ENCODE measurements at regions of chr2 and their contacts with region 1.

Region 1: GRCh38 chr2:3651691-3652648 is 6.0 kb upstream of the ALLC start:
- DNase-seq: peak; percentile 33 to 89 (median 75)
- H3K4me3 ChIP-seq: peak overlapping the region; percentile 66
- H3K4me3 Mint-ChIP-seq: peak overlapping the region; percentile 79 to 96 (median 89)
- H3K27ac ChIP-seq: peak overlapping the region; percentile 32
- H3K27ac Mint-ChIP-seq: peak overlapping the region in 7 of 8 donors; percentile 87 to 98 (median 95)
- H3K4me1 ChIP-seq: peaks cover 9% of the 10 kb centered on the region
- H3K4me1 Mint-ChIP-seq: peaks cover 11 to 18% (median 16%) of the 10 kb centered on the region in 3 donors
- H3K27me3 ChIP-seq: no peaks in the 10 kb centered on the region
- H3K27me3 Mint-ChIP-seq: peaks cover 0 to 11% of the 10 kb centered on the region in 2 donors

Region 2: DNA sequence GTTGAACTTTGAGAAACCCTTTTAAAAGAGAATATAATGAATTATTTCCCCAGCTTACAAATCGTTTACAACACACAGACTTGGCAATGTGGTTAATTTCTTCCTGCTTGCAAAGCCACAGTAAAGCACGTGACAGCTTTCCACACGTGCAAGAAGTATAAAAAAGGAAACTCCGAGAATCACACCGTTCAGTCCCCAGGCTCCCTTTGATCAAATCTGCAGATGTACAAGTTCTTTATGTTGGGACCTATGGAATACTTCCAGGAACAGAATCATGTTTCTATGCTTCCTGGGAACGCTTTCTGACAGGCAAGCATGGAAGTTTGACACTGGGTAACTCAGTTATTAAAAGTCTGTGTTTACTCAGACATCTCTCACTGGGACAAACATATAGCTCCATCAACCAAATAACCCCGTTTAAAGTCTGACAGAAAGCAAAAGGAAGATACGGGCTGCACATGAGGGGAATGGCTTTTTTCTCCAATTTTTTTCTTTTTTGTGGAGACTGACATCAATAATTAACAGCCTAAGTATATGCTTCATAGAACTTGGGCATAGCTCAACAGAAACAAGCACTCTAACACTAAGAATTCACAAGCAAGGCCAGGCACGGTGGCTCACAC is 409.1 kb before region 1 on chr2:
- CTCF ChIA-PET with region 1: no interaction called
- POLR2A ChIA-PET with region 1: no interaction called
- DNase-seq: peak; percentile 25 to 68 (median 54)
- H3K4me3 ChIP-seq: no peak overlapping the region
- H3K4me3 Mint-ChIP-seq: peak overlapping the region; percentile 22 to 75 (median 63)
- H3K27ac ChIP-seq: no peak overlapping the region
- H3K27ac Mint-ChIP-seq: peak overlapping the region; percentile 3 to 87 (median 85)
- H3K4me1 ChIP-seq: peaks cover 48% of the 10 kb centered on the region
- H3K4me1 Mint-ChIP-seq: peaks cover 6 to 30% (median 30%) of the 10 kb centered on the region in 3 donors
- H3K27me3 ChIP-seq: no peaks in the 10 kb centered on the region
- H3K27me3 Mint-ChIP-seq: no peaks in the 10 kb centered on the region

Region 3: GRCh38 chr2:3423492-3424175 is 228.3 kb before region 1 on chr2:
- CTCF ChIA-PET with region 1: interaction called, 61 read pairs
- POLR2A ChIA-PET with region 1: no interaction called
- DNase-seq: peak; percentile 44 to 78 (median 60)
- H3K4me3 ChIP-seq: no peak overlapping the region
- H3K4me3 Mint-ChIP-seq: no peak overlapping the region
- H3K27ac ChIP-seq: no peak overlapping the region
- H3K27ac Mint-ChIP-seq: peak overlapping the region in 6 of 8 donors; percentile 2 to 71 (median 26)
- H3K4me1 ChIP-seq: no peaks in the 10 kb centered on the region
- H3K4me1 Mint-ChIP-seq: peaks cover 3 to 6% (median 5%) of the 10 kb centered on the region in 3 donors
- H3K27me3 ChIP-seq: no peaks in the 10 kb centered on the region
- H3K27me3 Mint-ChIP-seq: no peaks in the 10 kb centered on the region

Region 4: GRCh38 chr2:3461801-3462492 is 190.0 kb before region 1 on chr2:
- CTCF ChIA-PET with region 1: interaction called, 16 read pairs
- POLR2A ChIA-PET with region 1: no interaction called
- DNase-seq: peak in 3 of 5 donors; percentile 34 to 39 (median 36)
- H3K4me3 ChIP-seq: no peak overlapping the region
- H3K4me3 Mint-ChIP-seq: no peak overlapping the region
- H3K27ac ChIP-seq: no peak overlapping the region
- H3K27ac Mint-ChIP-seq: peak overlapping the region in 5 of 8 donors; percentile 12 to 71 (median 59)
- H3K4me1 ChIP-seq: peaks cover 5% of the 10 kb centered on the region
- H3K4me1 Mint-ChIP-seq: peaks cover 4 to 5% (median 4%) of the 10 kb centered on the region in 3 donors
- H3K27me3 ChIP-seq: no peaks in the 10 kb centered on the region
- H3K27me3 Mint-ChIP-seq: no peaks in the 10 kb centered on the region

Region 5: GRCh38 chr2:3628800-3629199 is 23.2 kb before region 1 on chr2:
- CTCF ChIA-PET with region 1: no interaction called
- POLR2A ChIA-PET with region 1: no interaction called
- DNase-seq: no peak
- H3K4me3 ChIP-seq: no peak overlapping the region
- H3K4me3 Mint-ChIP-seq: no peak overlapping the region
- H3K27ac ChIP-seq: no peak overlapping the region
- H3K27ac Mint-ChIP-seq: no peak overlapping the region
- H3K4me1 ChIP-seq: no peaks in the 10 kb centered on the region
- H3K4me1 Mint-ChIP-seq: no peaks in the 10 kb centered on the region
- H3K27me3 ChIP-seq: no peaks in the 10 kb centered on the region
- H3K27me3 Mint-ChIP-seq: peaks cover 2 to 5% of the 10 kb centered on the region in 2 donors

Measured in CD8-positive, alpha-beta memory T cell (primary cell).